ENCODE measurements at regions of chr7 and their contacts with region 1.

Region 1: GRCh38 chr7:156533420-156533819 is 107.2 kb upstream of the RNF32 start:
- DNase-seq: no peak
- ATAC-seq: no peak
- H3K4me3 ChIP-seq: no peak overlapping the region
- H3K4me3 Mint-ChIP-seq: no peak overlapping the region
- H3K27ac ChIP-seq: no peak overlapping the region
- H3K27ac Mint-ChIP-seq: no peak overlapping the region
- H3K4me1 ChIP-seq: no peaks in the 10 kb centered on the region
- H3K4me1 Mint-ChIP-seq: no peaks in the 10 kb centered on the region
- H3K27me3 ChIP-seq: no peaks in the 10 kb centered on the region
- H3K27me3 Mint-ChIP-seq: no peaks in the 10 kb centered on the region
- CTCF ChIP-seq: no peak

Region 2: DNA sequence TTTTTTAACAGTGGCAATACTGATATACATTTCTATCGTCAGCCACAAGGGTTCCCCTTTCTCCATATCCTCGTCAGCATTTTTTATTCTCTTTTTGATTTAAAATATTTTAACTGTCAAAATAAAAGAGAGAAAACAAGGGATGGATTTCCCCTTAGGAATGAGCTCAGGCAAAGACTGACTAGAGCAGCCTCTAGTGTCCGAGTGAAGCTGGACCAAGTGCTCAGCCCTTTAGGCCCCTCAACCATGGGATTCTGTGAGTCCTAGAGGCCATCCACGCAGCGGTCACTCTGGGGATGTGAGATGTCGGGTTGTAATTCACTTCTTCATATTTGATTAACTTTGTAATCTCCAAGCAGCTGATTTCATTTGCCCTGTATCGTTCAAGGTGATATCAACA is 30.2 kb before region 1 on chr7:
- CTCF ChIA-PET with region 1: no interaction called
- POLR2A ChIA-PET with region 1: no interaction called
- intact Hi-C with region 1: loop called in 1 of 2 experiments (anchors 1 kb)
- DNase-seq: no peak
- ATAC-seq: no peak
- H3K4me3 ChIP-seq: no peak overlapping the region
- H3K4me3 Mint-ChIP-seq: no peak overlapping the region
- H3K27ac ChIP-seq: no peak overlapping the region
- H3K27ac Mint-ChIP-seq: no peak overlapping the region
- H3K4me1 ChIP-seq: no peaks in the 10 kb centered on the region
- H3K4me1 Mint-ChIP-seq: no peaks in the 10 kb centered on the region
- H3K27me3 ChIP-seq: peaks cover 0 to 5% of the 10 kb centered on the region in 2 experiments
- H3K27me3 Mint-ChIP-seq: peaks cover 20% of the 10 kb centered on the region
- CTCF ChIP-seq: no peak

Region 3: GRCh38 chr7:156543699-156544598 is 10.5 kb after region 1 on chr7:
- CTCF ChIA-PET with region 1: no interaction called
- POLR2A ChIA-PET with region 1: no interaction called
- intact Hi-C with region 1: loop called in 1 of 2 experiments (anchors 1 kb)
- DNase-seq: no peak
- ATAC-seq: no peak
- H3K4me3 ChIP-seq: no peak overlapping the region
- H3K4me3 Mint-ChIP-seq: no peak overlapping the region
- H3K27ac ChIP-seq: no peak overlapping the region
- H3K27ac Mint-ChIP-seq: no peak overlapping the region
- H3K4me1 ChIP-seq: no peaks in the 10 kb centered on the region
- H3K4me1 Mint-ChIP-seq: no peaks in the 10 kb centered on the region
- H3K27me3 ChIP-seq: peaks cover 0 to 3% of the 10 kb centered on the region in 2 experiments
- H3K27me3 Mint-ChIP-seq: peaks cover 41% of the 10 kb centered on the region
- CTCF ChIP-seq: no peak

Measured in CD4-positive, alpha-beta T cell (primary cell).